PC-9 (cell line): ENCODE measurements at regions of chr10 and their contacts with region 1.

Region 1: DNA sequence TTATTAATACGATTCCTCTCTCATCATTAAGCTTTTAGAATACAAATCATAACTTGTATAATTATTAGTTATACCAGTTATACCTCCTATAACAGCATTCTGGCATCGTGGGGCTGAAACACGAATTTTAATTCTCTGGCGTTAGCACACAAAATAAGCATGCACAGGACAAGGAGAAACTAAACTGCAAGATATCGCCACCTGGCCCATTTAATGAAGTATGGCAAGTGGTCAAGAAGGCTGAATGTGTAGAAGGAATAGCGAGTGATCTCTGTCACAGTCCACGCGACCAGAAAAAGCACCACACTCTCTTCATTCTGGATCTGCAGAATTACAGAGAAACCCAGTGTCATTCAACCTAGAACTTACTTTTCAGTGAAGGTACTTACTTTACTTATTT is 18.1 kb downstream of the HACD1 start:
- DNase-seq: peak in 1 of 2 experiments; percentile 10
- H3K4me3 ChIP-seq: no peak overlapping the region
- H3K27ac ChIP-seq: no peak overlapping the region
- H3K4me1 ChIP-seq: no peaks in the 10 kb centered on the region
- H3K27me3 ChIP-seq: no peaks in the 10 kb centered on the region
- CTCF ChIP-seq: 0 out of 2 replicates have a peak, but pooled peaks have one; percentile 32

Region 2: GRCh38 chr10:17181758-17182157 is 417.3 kb before region 1 on chr10:
- CTCF ChIA-PET with region 1: no interaction called
- POLR2A ChIA-PET with region 1: no interaction called
- intact Hi-C with region 1: no loop called
- DNase-seq: peak in 1 of 2 experiments; percentile 4
- H3K4me3 ChIP-seq: no peak overlapping the region
- H3K27ac ChIP-seq: no peak overlapping the region
- H3K4me1 ChIP-seq: peaks cover 9% of the 10 kb centered on the region
- H3K27me3 ChIP-seq: no peaks in the 10 kb centered on the region
- CTCF ChIP-seq: no peak

Region 3: GRCh38 chr10:17290226-17290625 is 308.9 kb before region 1 on chr10:
- CTCF ChIA-PET with region 1: no interaction called
- POLR2A ChIA-PET with region 1: no interaction called
- intact Hi-C with region 1: loop called (anchors 1 kb)
- DNase-seq: peak; percentile 10 to 37
- H3K4me3 ChIP-seq: no peak overlapping the region
- H3K27ac ChIP-seq: no peak overlapping the region
- H3K4me1 ChIP-seq: no peaks in the 10 kb centered on the region
- H3K27me3 ChIP-seq: no peaks in the 10 kb centered on the region
- CTCF ChIP-seq: peak; percentile 66

Region 4: GRCh38 chr10:17544465-17544864 is 54.6 kb before region 1 on chr10:
- CTCF ChIA-PET with region 1: no interaction called
- POLR2A ChIA-PET with region 1: no interaction called
- intact Hi-C with region 1: no loop called
- DNase-seq: no peak
- H3K4me3 ChIP-seq: no peak overlapping the region
- H3K27ac ChIP-seq: no peak overlapping the region
- H3K4me1 ChIP-seq: no peaks in the 10 kb centered on the region
- H3K27me3 ChIP-seq: no peaks in the 10 kb centered on the region
- CTCF ChIP-seq: no peak

Region 5: DNA sequence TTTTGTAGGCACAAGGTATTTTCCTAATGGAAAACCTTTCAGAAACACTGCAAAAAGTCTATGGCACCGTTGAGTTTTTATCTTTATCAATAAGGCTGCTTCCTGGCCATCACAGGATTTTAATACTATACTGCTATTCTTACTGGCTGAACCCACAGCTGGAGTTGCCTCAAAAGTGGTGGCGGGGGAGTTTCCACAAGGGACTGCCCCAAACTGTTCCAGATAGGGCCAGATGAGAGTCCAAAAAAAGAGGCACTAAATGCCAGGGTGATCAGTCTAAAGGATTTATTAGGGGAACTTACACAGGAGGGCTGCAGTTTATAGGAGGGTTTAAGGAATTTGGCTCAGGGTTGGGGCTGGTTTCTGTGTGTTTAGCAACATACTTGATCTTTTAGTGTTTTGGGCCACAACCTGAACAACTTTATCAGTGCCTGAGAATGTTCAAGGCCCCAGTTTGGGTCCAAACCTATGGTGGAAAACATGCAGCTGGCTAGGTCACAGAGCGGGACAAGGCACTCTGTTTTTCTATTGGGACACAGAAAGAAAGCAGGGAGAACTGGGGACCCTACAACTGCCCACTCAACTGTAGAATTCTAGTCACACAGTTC is 86.2 kb after region 1 on chr10:
- CTCF ChIA-PET with region 1: no interaction called
- POLR2A ChIA-PET with region 1: no interaction called
- intact Hi-C with region 1: no loop called
- DNase-seq: no peak
- H3K4me3 ChIP-seq: no peak overlapping the region
- H3K27ac ChIP-seq: no peak overlapping the region
- H3K4me1 ChIP-seq: 0 out of 2 replicates have a peak, but pooled peaks cover 4% of the 10 kb centered on the region
- H3K27me3 ChIP-seq: no peaks in the 10 kb centered on the region
- CTCF ChIP-seq: no peak

Region 6: GRCh38 chr10:17808971-17809841 is 210.1 kb after region 1 on chr10 and contains the start of gene MRC1:
- CTCF ChIA-PET with region 1: no interaction called
- POLR2A ChIA-PET with region 1: no interaction called
- intact Hi-C with region 1: no loop called
- DNase-seq: no peak
- H3K4me3 ChIP-seq: no peak within 1 kb of the TSS
- H3K27ac ChIP-seq: no peak within 1 kb of the TSS
- H3K4me1 ChIP-seq: no peaks in the 10 kb centered on the region
- H3K27me3 ChIP-seq: no peaks in the 10 kb centered on the region
- CTCF ChIP-seq: no peak
- total RNA-seq, gene MRC1: 0.07 TPM in 1 of 2 replicates, not detected in the other